Adrenal gland (tissue), 19 donors: ENCODE measurements at regions of chr1 and their contacts with region 1.

Region 1: GRCh38 chr1:10530281-10530740 is 55.6 kb downstream of the PEX14 start:
- DNase-seq: peak; percentile 67 to 83 (median 76)
- H3K4me3 ChIP-seq: no peak overlapping the region
- H3K27ac ChIP-seq: no peak overlapping the region
- H3K4me1 ChIP-seq: peaks cover 0 to 29% of the 10 kb centered on the region in 2 donors
- H3K27me3 ChIP-seq: no peaks in the 10 kb centered on the region
- CTCF ChIP-seq: peak; percentile 67 to 82 (median 78)
- POLR2A ChIP-seq: no peak

Region 2: GRCh38 chr1:10694633-10695627 is 164.6 kb after region 1 on chr1:
- intact Hi-C with region 1: loop called in 1 of 2 experiments (anchors 10 kb)
- DNase-seq: peak; percentile 88 to 93 (median 92)
- H3K4me3 ChIP-seq: peak overlapping the region in 1 of 4 donors; percentile 70
- H3K27ac ChIP-seq: peak overlapping the region in 3 of 5 donors; percentile 60 to 82 (median 76)
- H3K4me1 ChIP-seq: peaks cover 10 to 18% of the 10 kb centered on the region in 2 donors
- H3K27me3 ChIP-seq: no peaks in the 10 kb centered on the region
- CTCF ChIP-seq: no peak
- POLR2A ChIP-seq: no peak

Region 3: DNA sequence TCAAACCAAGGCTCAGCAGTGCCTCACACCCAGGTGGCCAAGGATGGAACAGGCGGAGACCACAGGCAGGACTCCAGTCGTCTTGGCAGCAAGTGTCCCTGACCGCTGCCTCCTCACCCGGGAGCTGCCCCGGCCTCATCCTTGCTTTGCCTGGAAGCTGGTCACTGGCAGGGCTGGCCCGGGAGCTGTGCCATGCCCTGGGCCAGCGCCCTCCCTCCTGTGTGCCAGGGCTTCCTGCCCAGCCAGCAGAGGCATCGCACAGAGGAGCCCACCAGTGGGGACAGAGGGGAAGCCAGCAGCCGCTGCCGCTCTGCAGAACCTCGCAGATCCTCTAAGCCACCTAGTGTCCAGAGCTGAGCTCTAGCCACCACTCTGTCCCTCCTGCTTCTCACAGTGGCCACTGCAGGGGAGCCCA is 258.3 kb after region 1 on chr1:
- intact Hi-C with region 1: loop called in 1 of 2 experiments (anchors 10 kb)
- DNase-seq: peak; percentile 42 to 83 (median 71)
- H3K4me3 ChIP-seq: no peak overlapping the region
- H3K27ac ChIP-seq: peak overlapping the region in 1 of 5 donors; percentile 50
- H3K4me1 ChIP-seq: peaks cover under 1 to 17% of the 10 kb centered on the region in 2 donors
- H3K27me3 ChIP-seq: no peaks in the 10 kb centered on the region
- CTCF ChIP-seq: peak in 5 of 6 experiments; percentile 30 to 52 (median 43)
- POLR2A ChIP-seq: no peak